ENCODE measurements at regions of chr19 and their contacts with region 1.

Region 1: DNA sequence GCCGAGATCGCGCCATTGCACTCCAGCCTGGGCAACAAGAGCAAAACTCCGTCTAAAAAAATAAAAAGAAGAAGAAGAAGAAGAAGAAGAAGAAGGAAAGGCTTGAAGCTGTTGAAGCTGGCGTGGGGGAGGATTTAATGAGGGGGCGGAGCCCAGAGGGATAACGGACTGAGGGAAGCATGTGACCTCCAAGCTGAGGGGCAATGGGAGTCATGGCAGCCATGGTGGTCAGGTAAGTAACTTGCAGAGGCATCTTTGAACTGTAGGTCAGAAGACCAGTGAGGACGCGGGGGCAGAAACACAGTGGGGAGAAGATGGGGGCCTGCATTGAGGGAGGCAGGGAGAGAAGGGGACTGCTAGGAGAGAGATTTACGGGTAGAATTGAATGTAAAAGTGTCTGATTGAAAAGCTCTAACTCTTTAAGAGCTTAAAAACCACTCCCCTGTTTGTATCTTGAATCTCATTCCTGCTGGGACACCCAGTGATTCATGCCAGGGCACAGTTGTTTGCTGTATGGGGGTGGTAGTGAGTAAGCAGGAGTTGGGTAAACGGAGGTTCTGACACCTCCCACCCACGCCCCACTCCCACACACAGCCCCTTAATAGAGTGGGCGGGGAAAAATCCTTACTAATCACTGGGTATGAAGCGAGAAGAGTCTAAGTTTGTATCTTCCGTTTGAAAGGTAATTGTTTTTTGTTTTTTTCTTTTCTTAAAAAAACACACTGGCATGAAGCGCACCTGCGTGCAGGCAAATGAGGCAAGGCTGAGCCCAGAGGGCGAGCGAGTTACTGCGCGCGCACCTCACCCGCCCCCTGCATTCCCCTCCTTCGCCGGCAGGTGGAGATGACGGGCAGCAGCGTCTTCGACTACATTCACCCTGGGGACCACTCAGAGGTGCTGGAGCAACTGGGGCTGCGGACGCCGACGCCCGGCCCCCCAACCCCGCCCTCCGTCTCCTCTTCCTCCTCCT is 13.0 kb downstream of the TMEM160 start:
- DNase-seq: peak; percentile 92 to 98
- H3K4me3 ChIP-seq: peak overlapping the region; percentile 54
- H3K27ac ChIP-seq: peak overlapping the region; percentile 72
- H3K4me1 ChIP-seq: peaks cover 19% of the 10 kb centered on the region
- H3K27me3 ChIP-seq: no peaks in the 10 kb centered on the region
- CTCF ChIP-seq: peak; percentile 98

Region 2: DNA sequence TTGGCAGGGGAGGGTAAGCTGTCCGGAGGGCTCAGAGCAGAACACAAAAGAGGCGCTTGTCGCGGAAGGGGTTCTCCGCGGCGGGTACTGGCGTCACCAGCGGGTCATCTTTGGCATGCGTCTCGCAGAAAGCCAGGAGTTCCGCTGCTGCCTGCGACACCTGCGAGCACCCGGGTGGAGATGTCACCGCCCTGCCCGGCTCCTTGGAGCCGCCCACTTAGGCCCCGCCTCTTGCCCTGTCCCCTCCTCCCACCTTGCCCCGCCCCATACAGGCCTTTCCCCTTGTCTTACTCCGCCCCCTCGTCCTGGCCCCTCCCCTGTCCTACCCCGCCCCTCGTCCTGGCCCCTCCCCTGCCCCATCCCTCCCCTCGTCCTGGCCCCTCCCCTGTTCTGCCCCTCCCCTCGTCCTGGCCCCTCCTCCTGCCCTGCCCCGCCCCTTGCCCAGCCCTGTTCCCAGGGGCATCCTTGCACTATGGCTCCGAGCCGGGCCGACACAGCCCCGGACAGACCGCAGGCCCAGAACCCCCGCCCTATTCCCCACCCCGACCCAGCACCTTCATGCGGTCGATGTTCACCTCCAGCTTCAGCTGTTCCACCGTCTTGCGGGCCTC is 401.3 kb before region 1 on chr19:
- CTCF ChIA-PET with region 1: no interaction called
- POLR2A ChIA-PET with region 1: interaction called, 13 read pairs
- intact Hi-C with region 1: no loop called
- DNase-seq: peak; percentile 79 to 97
- H3K4me3 ChIP-seq: peak overlapping the region; percentile 53
- H3K27ac ChIP-seq: no peak overlapping the region
- H3K4me1 ChIP-seq: peaks cover 14% of the 10 kb centered on the region
- H3K27me3 ChIP-seq: peaks cover 68% of the 10 kb centered on the region
- CTCF ChIP-seq: no peak

Region 3: DNA sequence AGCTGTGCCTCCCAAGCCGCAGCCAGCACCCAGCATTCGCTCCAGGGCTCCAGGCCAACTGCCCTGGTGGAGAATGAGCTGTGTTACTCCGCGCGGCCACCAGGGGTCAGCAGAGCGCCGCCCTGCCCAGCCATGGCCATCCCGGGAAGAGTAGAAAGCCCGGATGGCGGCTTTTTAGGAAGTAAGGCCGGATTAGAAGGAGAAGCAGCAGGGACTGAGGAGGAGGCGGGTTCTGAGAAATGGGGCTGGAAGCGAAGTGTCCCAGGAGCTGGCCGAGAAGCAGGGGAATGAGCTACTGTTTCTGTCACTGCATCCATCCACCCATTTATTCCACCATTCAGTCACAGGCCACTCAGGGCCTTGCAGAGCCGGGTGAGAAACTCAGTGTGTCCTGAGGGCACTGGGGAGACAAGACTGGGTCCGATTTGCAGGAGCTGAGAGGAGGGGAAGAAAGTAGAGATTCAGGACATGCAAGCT is 22.3 kb before region 1 on chr19:
- CTCF ChIA-PET with region 1: no interaction called
- POLR2A ChIA-PET with region 1: no interaction called
- intact Hi-C with region 1: loop called (anchors 1 kb)
- DNase-seq: peak; percentile 65 to 88
- H3K4me3 ChIP-seq: peak overlapping the region; percentile 7; the same call in 1 of the 2 replicates
- H3K27ac ChIP-seq: no peak overlapping the region
- H3K4me1 ChIP-seq: peaks cover 6% of the 10 kb centered on the region
- H3K27me3 ChIP-seq: no peaks in the 10 kb centered on the region
- CTCF ChIP-seq: peak; percentile 99

Region 4: GRCh38 chr19:47057328-47057727 is 21.9 kb after region 1 on chr19:
- CTCF ChIA-PET with region 1: interaction called, 20 read pairs
- POLR2A ChIA-PET with region 1: no interaction called
- intact Hi-C with region 1: no loop called
- DNase-seq: no peak
- H3K4me3 ChIP-seq: no peak overlapping the region
- H3K27ac ChIP-seq: no peak overlapping the region
- H3K4me1 ChIP-seq: peaks cover 5% of the 10 kb centered on the region; the same call in 1 of the 2 replicates
- H3K27me3 ChIP-seq: no peaks in the 10 kb centered on the region
- CTCF ChIP-seq: no peak

Region 5: GRCh38 chr19:47124937-47125668 is 89.7 kb after region 1 on chr19:
- CTCF ChIA-PET with region 1: interaction called, 5 read pairs
- POLR2A ChIA-PET with region 1: no interaction called
- intact Hi-C with region 1: loop called (anchors 1 kb)
- DNase-seq: peak; percentile 39 to 75
- H3K4me3 ChIP-seq: no peak overlapping the region
- H3K27ac ChIP-seq: peak overlapping the region; percentile 65
- H3K4me1 ChIP-seq: peaks cover 40% of the 10 kb centered on the region
- H3K27me3 ChIP-seq: no peaks in the 10 kb centered on the region
- CTCF ChIP-seq: peak; percentile 96